ENCODE measurements at regions of chr14 and their contacts with region 1.

Region 1: GRCh38 chr14:69637503-69638030 is 26.2 kb downstream of the SUSD6 start:
- DNase-seq: no peak
- H3K4me3 Mint-ChIP-seq: no peak overlapping the region
- H3K27ac Mint-ChIP-seq: peak overlapping the region; percentile 94
- H3K4me1 Mint-ChIP-seq: peaks cover 79% of the 10 kb centered on the region
- H3K27me3 Mint-ChIP-seq: no peaks in the 10 kb centered on the region

Region 2: GRCh38 chr14:69648477-69649451 is 11.2 kb after region 1 on chr14:
- CTCF ChIA-PET with region 1: interaction called, 11 read pairs
- DNase-seq: no peak
- H3K4me3 Mint-ChIP-seq: no peak overlapping the region
- H3K27ac Mint-ChIP-seq: peak overlapping the region; percentile 17
- H3K4me1 Mint-ChIP-seq: peaks cover 82% of the 10 kb centered on the region
- H3K27me3 Mint-ChIP-seq: no peaks in the 10 kb centered on the region